A549 (cell line): ENCODE measurements at regions of chr1 and their contacts with region 1.

Region 1: DNA sequence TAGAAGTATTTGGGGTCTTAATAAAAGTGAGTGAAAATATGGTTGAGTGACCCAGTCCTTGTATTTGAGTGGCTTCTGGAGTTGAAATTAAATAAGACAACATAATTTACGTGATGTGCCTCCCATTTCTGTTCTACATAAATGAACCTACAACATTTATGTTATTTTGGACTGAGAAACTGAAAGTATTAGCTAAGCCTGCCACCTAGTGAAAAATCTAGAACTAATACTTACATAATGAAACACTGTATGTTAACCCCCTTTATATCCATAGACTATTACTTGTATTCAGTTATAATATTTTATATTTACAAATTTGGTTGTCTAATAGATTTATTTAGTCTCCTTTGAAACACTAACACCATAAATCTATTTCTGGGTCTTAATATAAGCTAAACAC is 298.9 kb downstream of the KCNT2 start:
- DNase-seq: peak in 1 of 2 experiments; percentile 42
- ATAC-seq: peak in 1 of 2 experiments; percentile 70; a peak in 3 of 6 replicates
- H3K4me3 ChIP-seq: no peak overlapping the region
- H3K27ac ChIP-seq: no peak overlapping the region
- H3K4me1 ChIP-seq: no peaks in the 10 kb centered on the region
- CTCF ChIP-seq: peak; percentile 61
- EP300 ChIP-seq: no peak
- POLR2A ChIP-seq: no peak
- RAD21 ChIP-seq: peak; percentile 70 to 78

Region 2: DNA sequence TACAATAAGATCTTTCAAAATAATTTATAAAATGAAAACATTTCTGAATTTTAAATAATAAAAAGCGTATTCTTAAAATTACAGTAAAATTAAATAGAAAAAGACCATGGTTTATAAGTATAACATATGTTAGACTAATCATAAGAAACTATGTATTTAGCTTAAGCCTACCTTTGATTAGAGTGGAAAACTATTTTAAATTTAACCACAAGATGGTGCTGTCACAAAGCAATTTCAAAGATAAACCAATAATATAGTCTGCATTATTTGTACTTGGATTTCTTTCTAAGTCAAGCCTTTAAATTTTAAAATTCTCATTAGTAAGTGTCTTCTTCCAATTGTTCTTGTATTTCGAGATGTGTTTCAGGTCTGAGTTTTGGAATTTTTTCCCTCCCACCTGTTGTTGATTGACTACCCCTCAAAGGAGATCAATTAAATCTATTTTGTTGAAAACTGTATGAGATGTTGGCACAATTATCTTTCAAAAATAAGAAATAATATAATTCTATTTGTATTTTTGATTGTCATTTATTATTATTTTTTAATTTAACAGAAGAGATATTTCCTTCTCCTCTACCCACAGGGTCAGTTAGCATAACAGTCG is 160.9 kb before region 1 on chr1:
- CTCF ChIA-PET with region 1: interaction called, 56 read pairs
- POLR2A ChIA-PET with region 1: no interaction called
- DNase-seq: peak; percentile 10 to 34
- ATAC-seq: peak in 1 of 2 experiments; percentile 78; a peak in 3 of 6 replicates
- H3K4me3 ChIP-seq: no peak overlapping the region
- H3K27ac ChIP-seq: no peak overlapping the region
- H3K4me1 ChIP-seq: no peaks in the 10 kb centered on the region
- CTCF ChIP-seq: peak; percentile 68
- EP300 ChIP-seq: no peak
- POLR2A ChIP-seq: no peak
- RAD21 ChIP-seq: peak; percentile 75 to 91